ENCODE measurements at regions of chr5 and their contacts with region 1.

Region 1: DNA sequence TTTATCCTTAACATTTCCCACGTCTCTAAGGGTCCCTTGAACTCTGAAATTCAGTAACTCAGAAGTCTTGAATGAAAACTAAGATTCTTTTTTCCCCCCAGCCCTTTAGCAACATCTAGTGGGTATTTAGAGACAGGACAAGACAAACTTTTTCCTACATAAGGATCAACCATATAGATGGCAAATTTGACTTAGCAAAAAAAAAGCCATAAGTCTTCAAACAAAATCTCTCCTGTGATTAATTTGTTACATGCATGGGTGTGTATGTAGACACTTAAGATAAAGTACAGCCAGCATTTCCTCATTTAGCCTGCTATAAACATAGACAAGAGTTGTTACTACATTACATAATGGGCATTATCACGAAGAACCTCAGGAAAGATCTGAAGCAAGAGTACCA is 29.1 kb upstream of the ANKRD31 start:
- DNase-seq: no peak
- ATAC-seq: peak; percentile 45; the same call in 1 of the 3 replicates
- H3K4me3 ChIP-seq: no peak overlapping the region
- H3K27ac ChIP-seq: no peak overlapping the region
- H3K4me1 ChIP-seq: no peaks in the 10 kb centered on the region
- H3K27me3 ChIP-seq: no peaks in the 10 kb centered on the region
- CTCF ChIP-seq: peak; percentile 45 to 48 (median 47); a peak in 5 of 6 replicates
- EP300 ChIP-seq: no peak
- POLR2A ChIP-seq: no peak
- RAD21 ChIP-seq: peak; percentile 76

Region 2: DNA sequence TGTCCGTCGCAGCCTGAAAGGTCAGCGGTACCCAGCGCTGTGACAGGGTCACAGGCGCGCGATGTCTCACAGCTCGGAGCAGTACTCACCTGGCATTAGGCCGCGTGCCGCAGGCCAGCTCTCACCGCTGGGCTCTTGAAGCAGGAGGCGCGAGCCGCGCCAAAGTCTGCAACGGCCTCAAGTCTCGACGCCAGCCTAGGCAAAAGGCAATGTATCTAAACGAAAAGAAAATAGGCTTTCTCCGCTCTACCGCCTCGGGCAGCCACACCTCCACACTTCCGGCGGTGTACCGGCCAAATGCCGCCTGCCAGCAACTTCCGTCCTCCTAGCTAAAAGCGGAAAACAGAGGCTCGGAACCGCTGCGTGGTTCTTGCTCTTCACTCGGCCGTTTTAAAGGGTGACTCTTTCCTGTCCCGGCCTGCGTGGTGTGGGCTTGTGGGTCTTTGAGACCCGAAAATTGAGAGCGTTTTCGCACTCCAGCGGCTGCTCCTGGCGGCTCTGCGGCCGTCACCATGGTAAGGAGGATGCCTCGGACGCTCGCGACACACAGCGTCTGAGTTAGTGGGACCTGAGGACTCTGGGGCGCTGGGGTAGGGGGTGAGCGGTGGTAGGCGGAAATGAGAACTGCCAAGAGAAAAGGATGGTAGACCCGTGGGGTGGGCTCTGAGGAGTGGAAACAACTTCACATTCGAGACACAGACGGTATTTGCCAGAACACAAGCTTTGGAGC is 498.7 kb before region 1 on chr5 and contains the starts of genes GFM2 and NSA2:
- CTCF ChIA-PET with region 1: no interaction called
- POLR2A ChIA-PET with region 1: no interaction called
- RAD21 ChIA-PET with region 1: no interaction called
- SMC1A ChIA-PET with region 1: no interaction called
- in situ Hi-C with region 1: no loop called
- intact Hi-C with region 1: loop called (anchors 5 kb)
- DNase-seq: peak; percentile 88
- ATAC-seq: peak; percentile 85
- H3K4me3 ChIP-seq: peak within 1 kb of the TSS; percentile 94
- H3K27ac ChIP-seq: peak within 1 kb of the TSS; percentile 81
- H3K4me1 ChIP-seq: peaks cover 9% of the 10 kb centered on the region
- H3K27me3 ChIP-seq: no peaks in the 10 kb centered on the region
- CTCF ChIP-seq: no peak
- EP300 ChIP-seq: no peak; a peak in 1 of 4 replicates
- POLR2A ChIP-seq: peak; percentile 82
- RAD21 ChIP-seq: no peak
- polyA plus RNA-seq, gene GFM2: 19.9 to 26.0 TPM
- polyA plus RNA-seq, gene NSA2: 77.8 to 98.2 TPM

Region 3: GRCh38 chr5:74927336-74927735 is 338.4 kb before region 1 on chr5:
- CTCF ChIA-PET with region 1: no interaction called
- POLR2A ChIA-PET with region 1: no interaction called
- RAD21 ChIA-PET with region 1: no interaction called
- SMC1A ChIA-PET with region 1: no interaction called
- in situ Hi-C with region 1: loop called (anchors 10 kb)
- intact Hi-C with region 1: no loop called
- DNase-seq: no peak
- ATAC-seq: no peak
- H3K4me3 ChIP-seq: no peak overlapping the region
- H3K27ac ChIP-seq: no peak overlapping the region
- H3K4me1 ChIP-seq: no peaks in the 10 kb centered on the region
- H3K27me3 ChIP-seq: no peaks in the 10 kb centered on the region
- CTCF ChIP-seq: no peak
- EP300 ChIP-seq: no peak
- POLR2A ChIP-seq: no peak
- RAD21 ChIP-seq: no peak

Region 4: DNA sequence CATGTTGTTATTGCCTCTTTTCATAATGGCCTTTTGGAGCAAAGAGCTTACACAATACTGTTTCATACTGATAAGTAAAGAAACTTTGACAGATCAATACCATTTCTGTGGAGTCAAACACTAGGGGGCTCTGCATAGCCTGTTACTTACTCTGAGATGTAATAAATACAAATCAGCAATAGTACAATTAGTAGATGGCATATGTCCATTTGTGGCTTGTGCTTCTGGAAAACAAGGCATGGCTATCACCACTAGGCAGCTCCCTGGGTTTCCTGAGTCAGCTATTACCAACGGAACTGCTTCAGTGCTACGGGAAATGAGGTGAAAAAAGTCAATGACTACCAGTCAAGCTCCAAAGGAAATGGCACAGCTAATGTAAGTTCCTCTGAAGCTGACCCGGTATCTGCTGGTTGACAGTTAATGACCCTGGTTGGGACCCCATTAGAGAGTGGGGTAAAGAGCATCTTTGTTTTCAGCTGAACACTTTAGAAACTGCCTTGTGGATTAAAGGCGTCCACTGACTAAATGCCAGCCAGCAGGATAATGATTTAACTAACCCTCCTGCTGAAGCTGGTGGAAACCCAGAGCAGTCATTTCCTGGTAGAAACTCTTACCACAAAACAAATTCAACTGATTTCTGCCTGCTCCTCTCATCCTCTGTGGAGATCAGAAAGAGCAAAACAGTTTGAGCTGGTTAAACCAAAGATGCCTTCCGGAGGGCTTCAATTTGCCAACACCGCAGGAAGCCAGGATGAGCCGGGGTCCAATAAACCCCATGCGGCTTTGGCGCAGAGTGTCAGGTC is 330.6 kb before region 1 on chr5:
- CTCF ChIA-PET with region 1: no interaction called
- POLR2A ChIA-PET with region 1: no interaction called
- RAD21 ChIA-PET with region 1: no interaction called
- SMC1A ChIA-PET with region 1: no interaction called
- in situ Hi-C with region 1: no loop called
- intact Hi-C with region 1: loop called (anchors 5 kb)
- DNase-seq: no peak
- ATAC-seq: peak; percentile 64
- H3K4me3 ChIP-seq: no peak overlapping the region
- H3K27ac ChIP-seq: no peak overlapping the region
- H3K4me1 ChIP-seq: no peaks in the 10 kb centered on the region
- H3K27me3 ChIP-seq: peaks cover 0 to 6% of the 10 kb centered on the region in 2 experiments; a peak in 2 of 4 replicates
- CTCF ChIP-seq: peak; percentile 31 to 40 (median 36); a peak in 4 of 6 replicates
- EP300 ChIP-seq: no peak
- POLR2A ChIP-seq: no peak
- RAD21 ChIP-seq: 0 out of 2 replicates have a peak, but pooled peaks have one; percentile 11

Region 5: DNA sequence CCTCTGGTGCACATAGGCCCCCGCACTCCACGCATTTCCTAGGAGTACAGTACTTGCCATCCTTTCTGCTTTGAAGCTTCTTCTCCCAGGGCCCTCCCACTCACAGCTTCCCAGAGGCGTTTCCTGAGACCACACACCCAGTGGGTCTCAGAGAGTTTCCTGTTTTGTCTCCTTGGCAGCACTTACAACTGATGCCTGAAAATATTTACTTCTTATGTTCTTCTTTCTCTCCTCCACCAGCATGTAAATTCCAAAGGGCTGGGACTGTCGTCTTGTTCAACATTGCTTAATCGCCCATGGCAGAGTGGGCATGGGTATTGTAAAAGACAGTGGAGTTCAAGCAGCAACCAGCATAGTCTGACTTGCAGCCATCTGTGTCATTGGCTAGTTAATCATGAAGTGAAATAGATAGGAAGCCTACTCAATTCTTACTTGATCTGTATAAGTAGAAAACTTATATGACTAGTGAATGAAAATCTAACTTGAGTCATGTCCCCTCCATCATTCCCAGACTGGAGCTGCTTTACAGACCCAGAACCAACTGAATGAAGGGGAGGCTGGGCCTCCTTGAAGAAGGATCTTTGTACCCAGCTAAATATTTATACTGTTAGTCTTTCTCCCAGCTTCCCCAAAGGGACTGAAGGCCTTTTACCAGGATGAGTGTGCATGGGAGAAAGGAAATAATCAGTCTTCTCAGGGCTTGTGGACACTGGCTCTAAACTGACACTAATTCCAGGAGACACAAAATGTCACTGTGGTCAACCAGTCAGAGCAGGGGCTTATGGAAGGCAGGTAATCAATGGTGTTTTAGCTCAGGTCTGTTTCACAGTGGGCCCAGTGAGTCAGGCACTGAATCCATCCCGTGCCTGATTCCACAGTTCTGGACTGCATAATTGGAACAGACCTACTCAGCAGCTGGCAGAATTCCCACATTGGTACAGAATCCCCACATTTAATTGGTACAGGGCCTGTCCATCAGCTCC is 933.9 kb after region 1 on chr5:
- CTCF ChIA-PET with region 1: no interaction called
- POLR2A ChIA-PET with region 1: no interaction called
- RAD21 ChIA-PET with region 1: no interaction called
- SMC1A ChIA-PET with region 1: no interaction called
- in situ Hi-C with region 1: no loop called
- intact Hi-C with region 1: no loop called
- DNase-seq: no peak
- ATAC-seq: no peak
- H3K4me3 ChIP-seq: no peak overlapping the region
- H3K27ac ChIP-seq: no peak overlapping the region
- H3K4me1 ChIP-seq: no peaks in the 10 kb centered on the region
- H3K27me3 ChIP-seq: no peaks in the 10 kb centered on the region
- CTCF ChIP-seq: no peak
- EP300 ChIP-seq: no peak
- POLR2A ChIP-seq: no peak
- RAD21 ChIP-seq: no peak